ENCODE measurements at regions of chr10 and their contacts with region 1.

Region 1: GRCh38 chr10:60444494-60445064 is 54.9 kb upstream of the ANK3 start:
- DNase-seq: peak in 1 of 2 experiments; percentile 27
- H3K4me3 ChIP-seq: no peak overlapping the region
- H3K4me3 Mint-ChIP-seq: no peak overlapping the region
- H3K27ac Mint-ChIP-seq: no peak overlapping the region
- H3K4me1 ChIP-seq: peaks cover 19% of the 10 kb centered on the region
- H3K4me1 Mint-ChIP-seq: peaks cover 21% of the 10 kb centered on the region
- H3K27me3 ChIP-seq: no peaks in the 10 kb centered on the region
- H3K27me3 Mint-ChIP-seq: no peaks in the 10 kb centered on the region
- CTCF ChIP-seq: peak; percentile 69 to 76

Region 2: GRCh38 chr10:60480865-60481563 is 36.4 kb after region 1 on chr10:
- CTCF ChIA-PET with region 1: no interaction called
- POLR2A ChIA-PET with region 1: no interaction called
- intact Hi-C with region 1: loop called (anchors 1 kb)
- DNase-seq: no peak
- H3K4me3 ChIP-seq: no peak overlapping the region
- H3K4me3 Mint-ChIP-seq: no peak overlapping the region
- H3K27ac Mint-ChIP-seq: no peak overlapping the region
- H3K4me1 ChIP-seq: peaks cover 56% of the 10 kb centered on the region
- H3K4me1 Mint-ChIP-seq: peaks cover 42% of the 10 kb centered on the region
- H3K27me3 ChIP-seq: no peaks in the 10 kb centered on the region
- H3K27me3 Mint-ChIP-seq: no peaks in the 10 kb centered on the region
- CTCF ChIP-seq: no peak

Region 3: DNA sequence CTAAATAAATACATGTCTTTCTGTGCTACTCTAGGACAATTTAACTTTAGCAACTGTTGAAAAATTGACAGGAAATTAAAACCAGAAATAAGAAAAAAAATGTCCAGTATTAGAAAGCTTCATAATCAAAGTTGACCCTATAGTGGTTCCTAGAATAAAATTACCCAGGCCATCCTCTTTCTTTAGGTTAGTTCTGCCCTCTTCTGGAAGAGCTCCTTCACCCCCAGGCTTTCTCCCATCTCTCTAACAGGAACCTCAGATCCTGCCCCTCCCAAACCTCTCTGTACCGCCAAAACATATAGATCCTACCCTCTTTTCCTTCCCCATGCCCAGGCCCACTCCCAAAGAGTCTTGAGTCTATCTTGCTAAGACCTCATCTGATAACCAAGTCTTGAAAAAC is 174.3 kb after region 1 on chr10:
- CTCF ChIA-PET with region 1: interaction called, 4 read pairs
- POLR2A ChIA-PET with region 1: no interaction called
- intact Hi-C with region 1: loop called (anchors 1 kb)
- DNase-seq: no peak
- H3K4me3 ChIP-seq: no peak overlapping the region
- H3K4me3 Mint-ChIP-seq: no peak overlapping the region
- H3K27ac Mint-ChIP-seq: no peak overlapping the region
- H3K4me1 ChIP-seq: peaks cover 8% of the 10 kb centered on the region
- H3K4me1 Mint-ChIP-seq: no peaks in the 10 kb centered on the region
- H3K27me3 ChIP-seq: no peaks in the 10 kb centered on the region
- H3K27me3 Mint-ChIP-seq: no peaks in the 10 kb centered on the region
- CTCF ChIP-seq: peak in 1 of 2 experiments; percentile 24

Region 4: GRCh38 chr10:60769406-60769805 is 324.8 kb after region 1 on chr10:
- CTCF ChIA-PET with region 1: interaction called, 3 read pairs
- POLR2A ChIA-PET with region 1: no interaction called
- intact Hi-C with region 1: loop called (anchors 1 kb)
- DNase-seq: no peak
- H3K4me3 ChIP-seq: no peak overlapping the region
- H3K4me3 Mint-ChIP-seq: peak overlapping the region; percentile 7
- H3K27ac Mint-ChIP-seq: no peak overlapping the region
- H3K4me1 ChIP-seq: peaks cover 10% of the 10 kb centered on the region
- H3K4me1 Mint-ChIP-seq: peaks cover 10% of the 10 kb centered on the region
- H3K27me3 ChIP-seq: no peaks in the 10 kb centered on the region
- H3K27me3 Mint-ChIP-seq: no peaks in the 10 kb centered on the region
- CTCF ChIP-seq: peak in 1 of 2 experiments; percentile 2